ENCODE measurements at regions of chr11 and their contacts with region 1.

Region 1: DNA sequence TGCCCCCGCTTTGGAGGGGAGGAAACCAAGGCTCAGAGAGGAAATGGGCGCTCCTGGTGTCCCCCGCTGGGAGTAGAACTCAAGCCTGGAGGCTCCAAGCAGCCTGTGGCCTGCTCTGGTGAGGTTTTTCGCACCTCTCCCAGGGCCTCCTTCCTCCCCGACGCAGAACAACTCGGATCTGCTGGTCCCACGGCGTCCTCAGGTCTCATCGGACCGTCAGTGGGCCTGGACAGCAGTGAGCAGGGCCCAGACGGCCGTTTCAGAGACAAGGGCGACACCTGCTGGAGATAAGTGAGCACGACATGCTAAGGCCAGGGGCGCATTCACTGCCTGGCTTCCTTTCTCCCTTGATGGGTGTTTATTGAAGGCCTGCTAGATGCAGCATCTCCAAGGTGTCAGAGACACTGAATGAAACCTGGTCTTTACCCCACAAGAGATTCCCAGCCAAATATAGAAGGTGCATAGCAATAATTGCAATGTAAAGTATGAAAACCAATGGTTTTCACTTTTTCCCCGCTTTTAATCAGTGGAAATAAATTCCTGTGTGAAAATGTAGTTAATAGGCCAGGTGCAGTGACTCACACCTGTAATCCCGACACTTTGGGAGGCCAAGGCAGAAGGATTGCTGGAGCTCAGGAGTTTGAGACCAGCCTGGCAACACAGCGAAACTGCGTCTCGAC is 26.9 kb upstream of the CD82 start:
- DNase-seq: peak; percentile 57 to 70 (median 67)
- H3K4me3 ChIP-seq: no peak overlapping the region
- H3K4me3 Mint-ChIP-seq: no peak overlapping the region
- H3K27ac ChIP-seq: no peak overlapping the region
- H3K27ac Mint-ChIP-seq: no peak overlapping the region
- H3K4me1 ChIP-seq: no peaks in the 10 kb centered on the region
- H3K4me1 Mint-ChIP-seq: peaks cover 4% of the 10 kb centered on the region
- H3K27me3 ChIP-seq: no peaks in the 10 kb centered on the region
- H3K27me3 Mint-ChIP-seq: peaks cover 0 to 6% (median 5%) of the 10 kb centered on the region in 3 donors
- CTCF ChIP-seq: peak; percentile 98

Region 2: DNA sequence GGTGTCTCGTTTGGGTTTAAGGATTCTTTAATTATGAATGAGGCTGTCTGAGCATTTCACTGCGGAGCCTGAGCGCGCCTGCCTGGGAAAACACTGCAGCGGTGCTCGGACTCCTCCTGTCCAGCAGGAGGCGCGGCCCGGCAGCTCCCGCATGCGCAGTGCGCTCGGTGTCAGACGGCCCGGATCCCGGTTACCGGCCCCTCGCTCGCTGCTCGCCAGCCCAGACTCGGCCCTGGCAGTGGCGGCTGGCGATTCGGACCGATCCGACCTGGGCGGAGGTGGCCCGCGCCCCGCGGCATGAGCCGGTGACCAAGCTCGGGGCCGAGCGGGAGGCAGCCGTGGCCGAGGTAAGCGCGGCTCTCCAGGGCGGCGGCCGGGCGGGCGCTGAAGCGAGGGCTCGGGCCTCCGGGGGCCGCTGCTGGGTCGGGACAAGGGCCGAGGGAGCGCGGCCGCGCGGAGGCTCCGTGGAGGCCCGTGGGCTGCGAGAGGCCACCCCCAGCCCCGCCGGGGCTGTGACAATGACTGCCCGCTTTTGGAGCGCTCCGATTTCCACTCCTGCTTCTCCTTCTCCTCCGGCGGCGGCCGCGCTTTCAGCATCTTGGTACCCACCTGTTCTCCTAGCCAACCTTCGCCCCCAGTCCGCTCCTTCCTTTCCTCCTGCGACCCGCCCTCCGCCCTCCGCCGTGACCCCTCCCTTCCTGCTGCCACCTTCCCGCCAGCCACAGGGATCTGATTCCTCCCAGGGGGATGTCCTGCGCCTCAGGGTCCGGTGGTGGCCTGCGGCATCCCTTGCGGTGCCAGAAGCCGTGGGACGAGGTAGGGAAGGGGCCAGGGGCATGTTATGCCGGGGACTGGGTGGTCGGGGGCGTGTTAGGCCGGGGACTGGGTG is 442.8 kb before region 1 on chr11 and contains the start of gene EXT2:
- intact Hi-C with region 1: loop called in 1 of 2 experiments (anchors 10 kb)
- DNase-seq: peak; percentile 81 to 85 (median 82)
- H3K4me3 ChIP-seq: peak within 1 kb of the TSS; percentile 62 to 85 (median 65)
- H3K4me3 Mint-ChIP-seq: peak within 1 kb of the TSS; percentile 83 to 92
- H3K27ac ChIP-seq: peak within 1 kb of the TSS in 1 of 2 donors; percentile 65
- H3K27ac Mint-ChIP-seq: peak within 1 kb of the TSS in 5 of 7 donors; percentile 24 to 82 (median 54)
- H3K4me1 ChIP-seq: peaks cover 11% of the 10 kb centered on the region in 2 donors
- H3K4me1 Mint-ChIP-seq: peaks cover 21% of the 10 kb centered on the region
- H3K27me3 ChIP-seq: no peaks in the 10 kb centered on the region
- H3K27me3 Mint-ChIP-seq: peaks cover 4 to 9% (median 5%) of the 10 kb centered on the region in 3 donors
- CTCF ChIP-seq: peak; percentile 98
- polyA plus RNA-seq, gene EXT2: 17.2 to 41.1 (median 34.2) TPM

Region 3: GRCh38 chr11:44286268-44286880 is 252.1 kb before region 1 on chr11:
- intact Hi-C with region 1: loop called (anchors 1 to 2 kb)
- DNase-seq: peak; percentile 28 to 54 (median 39)
- H3K4me3 ChIP-seq: no peak overlapping the region
- H3K4me3 Mint-ChIP-seq: no peak overlapping the region
- H3K27ac ChIP-seq: no peak overlapping the region
- H3K27ac Mint-ChIP-seq: no peak overlapping the region
- H3K4me1 ChIP-seq: no peaks in the 10 kb centered on the region
- H3K4me1 Mint-ChIP-seq: no peaks in the 10 kb centered on the region
- H3K27me3 ChIP-seq: no peaks in the 10 kb centered on the region
- H3K27me3 Mint-ChIP-seq: peaks cover 12 to 20% (median 17%) of the 10 kb centered on the region in 3 donors
- CTCF ChIP-seq: peak; percentile 98

Region 4: DNA sequence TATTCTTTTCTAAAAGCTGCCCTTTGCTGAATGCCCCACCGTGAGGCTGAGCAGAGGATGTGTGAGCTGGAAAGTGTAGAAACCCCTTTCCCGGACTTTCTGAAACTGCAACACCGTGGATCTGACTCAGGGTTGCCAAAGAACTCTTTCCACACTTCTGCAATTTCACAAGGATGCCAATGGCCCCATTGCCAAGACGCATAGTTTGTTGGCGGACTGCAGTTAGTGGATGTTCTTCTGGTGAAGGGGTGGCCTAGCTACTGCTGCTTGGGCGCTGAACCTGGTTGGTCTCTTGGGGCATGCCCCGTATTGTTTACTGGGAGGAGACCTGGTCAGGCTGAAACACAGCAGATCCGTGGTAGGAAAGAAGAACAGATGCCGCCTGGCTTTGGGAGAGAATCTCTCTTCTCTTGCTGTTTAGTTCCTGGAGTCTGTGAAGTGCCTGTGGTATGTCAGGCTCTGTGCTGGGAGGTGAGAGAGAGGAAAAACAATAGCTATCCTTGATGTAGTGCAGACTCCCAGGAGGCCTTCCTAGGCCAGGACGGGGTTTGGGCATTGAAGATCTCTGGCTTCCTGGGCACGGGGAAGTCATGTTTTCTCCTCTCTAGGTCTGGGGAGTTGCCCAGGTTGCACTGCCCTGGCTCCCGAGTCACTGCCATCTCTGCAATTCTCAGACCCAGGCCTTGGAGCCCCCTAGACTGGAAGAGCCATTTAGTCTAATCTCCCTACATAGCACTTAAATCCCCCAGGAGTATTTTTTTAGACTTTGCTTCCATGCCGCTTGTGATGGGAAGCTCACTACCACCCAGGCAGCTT is 53.8 kb after region 1 on chr11:
- intact Hi-C with region 1: no loop called
- DNase-seq: peak; percentile 93 to 97 (median 95)
- H3K4me3 ChIP-seq: no peak overlapping the region
- H3K4me3 Mint-ChIP-seq: peak overlapping the region in 1 of 2 donors; percentile 22
- H3K27ac ChIP-seq: peak overlapping the region; percentile 73 to 77
- H3K27ac Mint-ChIP-seq: peak overlapping the region; percentile 91 to 99 (median 95)
- H3K4me1 ChIP-seq: peaks cover 27 to 30% of the 10 kb centered on the region in 2 donors
- H3K4me1 Mint-ChIP-seq: peaks cover 33% of the 10 kb centered on the region
- H3K27me3 ChIP-seq: no peaks in the 10 kb centered on the region
- H3K27me3 Mint-ChIP-seq: peaks cover 0 to 3% (median 0%) of the 10 kb centered on the region in 3 donors
- CTCF ChIP-seq: no peak

Measured in CD14-positive monocyte (primary cell).